PC-9 (cell line): ENCODE measurements at regions of chr20 and their contacts with region 1.

Region 1: GRCh38 chr20:23668477-23668951 is 20.3 kb downstream of the CST4 start:
- DNase-seq: peak; percentile 59 to 66
- H3K4me3 ChIP-seq: no peak overlapping the region
- H3K27ac ChIP-seq: no peak overlapping the region
- H3K4me1 ChIP-seq: peaks cover 6% of the 10 kb centered on the region
- H3K27me3 ChIP-seq: no peaks in the 10 kb centered on the region
- CTCF ChIP-seq: peak; percentile 96

Region 2: GRCh38 chr20:23622839-23623343 is 45.6 kb before region 1 on chr20:
- CTCF ChIA-PET with region 1: interaction called, 10 read pairs
- POLR2A ChIA-PET with region 1: no interaction called
- intact Hi-C with region 1: no loop called
- DNase-seq: peak; percentile 74 to 81
- H3K4me3 ChIP-seq: peak overlapping the region; percentile 42; the same call in 1 of the 2 replicates
- H3K27ac ChIP-seq: peak overlapping the region; percentile 90
- H3K4me1 ChIP-seq: peaks cover 23% of the 10 kb centered on the region
- H3K27me3 ChIP-seq: no peaks in the 10 kb centered on the region
- CTCF ChIP-seq: no peak

Region 3: GRCh38 chr20:23774103-23774502 is 105.6 kb after region 1 on chr20:
- CTCF ChIA-PET with region 1: no interaction called
- POLR2A ChIA-PET with region 1: no interaction called
- intact Hi-C with region 1: loop called (anchors 2 kb)
- DNase-seq: no peak
- H3K4me3 ChIP-seq: no peak overlapping the region
- H3K27ac ChIP-seq: no peak overlapping the region
- H3K4me1 ChIP-seq: no peaks in the 10 kb centered on the region
- H3K27me3 ChIP-seq: no peaks in the 10 kb centered on the region
- CTCF ChIP-seq: no peak